ENCODE measurements at regions of chr4 and their contacts with region 1.

Region 1: GRCh38 chr4:81494031-81494431 is 22.3 kb upstream of the RASGEF1B start:
- DNase-seq: no peak
- ATAC-seq: peak; percentile 33
- H3K4me3 Mint-ChIP-seq: peak overlapping the region; percentile 57
- H3K27ac Mint-ChIP-seq: peak overlapping the region; percentile 82
- H3K4me1 Mint-ChIP-seq: peaks cover 55% of the 10 kb centered on the region
- H3K27me3 Mint-ChIP-seq: no peaks in the 10 kb centered on the region
- CTCF ChIP-seq: no peak

Region 2: GRCh38 chr4:80058740-80059139 is 1435.3 kb before region 1 on chr4:
- CTCF ChIA-PET with region 1: no interaction called
- POLR2A ChIA-PET with region 1: no interaction called
- intact Hi-C with region 1: loop called (anchors 5 kb)
- DNase-seq: no peak
- ATAC-seq: peak; percentile 89
- H3K4me3 Mint-ChIP-seq: peak overlapping the region; percentile 79
- H3K27ac Mint-ChIP-seq: peak overlapping the region; percentile 99
- H3K4me1 Mint-ChIP-seq: peaks cover 30% of the 10 kb centered on the region
- H3K27me3 Mint-ChIP-seq: no peaks in the 10 kb centered on the region
- CTCF ChIP-seq: no peak

Region 3: DNA sequence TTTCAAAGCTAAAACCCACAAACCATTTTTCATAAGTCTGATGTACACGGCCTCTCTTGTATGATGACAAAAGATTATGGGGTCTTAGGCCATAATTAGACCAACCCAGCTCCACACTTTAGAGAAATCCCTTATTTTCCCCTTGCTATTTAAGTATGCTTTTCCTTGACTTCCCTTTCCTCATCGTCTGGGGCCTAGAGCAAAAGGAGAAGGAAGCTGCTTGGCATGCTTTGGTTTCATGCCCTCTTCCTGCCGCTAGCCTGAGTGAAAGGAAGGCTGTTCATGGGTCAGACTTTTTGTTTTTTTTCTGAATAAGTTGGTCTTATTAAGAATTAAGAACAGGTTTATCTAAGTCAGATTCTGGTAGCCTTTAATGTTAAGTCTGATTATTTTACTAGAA is 11.7 kb before region 1 on chr4:
- CTCF ChIA-PET with region 1: interaction called, 4 read pairs
- POLR2A ChIA-PET with region 1: interaction called, 3 read pairs
- intact Hi-C with region 1: loop called (anchors 1 kb)
- DNase-seq: no peak
- ATAC-seq: no peak
- H3K4me3 Mint-ChIP-seq: no peak overlapping the region
- H3K27ac Mint-ChIP-seq: peak overlapping the region; percentile 43
- H3K4me1 Mint-ChIP-seq: peaks cover 8% of the 10 kb centered on the region
- H3K27me3 Mint-ChIP-seq: no peaks in the 10 kb centered on the region
- CTCF ChIP-seq: no peak

Region 4: DNA sequence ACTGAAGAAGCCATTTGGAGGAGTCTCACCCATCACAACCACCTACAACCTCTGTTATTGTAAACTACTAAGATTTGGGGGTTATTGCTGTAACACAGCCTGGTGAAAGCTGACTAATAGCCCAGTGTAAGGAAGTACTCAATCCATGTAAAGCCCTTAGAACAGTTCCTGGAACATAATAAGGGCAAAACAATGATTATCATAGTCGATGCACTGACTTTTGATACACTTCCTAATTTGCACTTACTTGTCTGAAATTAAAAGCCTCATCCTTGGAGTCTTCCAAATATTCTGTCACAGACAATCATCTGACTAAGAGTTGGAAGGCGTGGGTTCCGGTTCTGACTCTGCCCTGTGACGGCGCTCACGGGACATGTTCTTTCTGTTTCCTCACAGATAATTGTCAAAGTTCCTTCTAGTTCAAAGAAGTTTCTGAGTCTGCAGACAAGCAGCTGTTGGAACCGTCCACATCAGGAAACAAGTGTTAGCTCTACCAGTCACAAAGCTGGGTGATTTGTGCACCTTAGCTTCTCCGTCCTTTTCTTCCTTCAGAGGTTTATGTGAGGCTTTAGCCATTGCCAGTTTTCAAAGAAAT is 11.1 kb after region 1 on chr4:
- CTCF ChIA-PET with region 1: no interaction called
- POLR2A ChIA-PET with region 1: interaction called, 7 read pairs
- intact Hi-C with region 1: loop called (anchors 1 kb)
- DNase-seq: no peak
- ATAC-seq: peak; percentile 56
- H3K4me3 Mint-ChIP-seq: peak overlapping the region; percentile 71
- H3K27ac Mint-ChIP-seq: peak overlapping the region; percentile 92
- H3K4me1 Mint-ChIP-seq: peaks cover 86% of the 10 kb centered on the region
- H3K27me3 Mint-ChIP-seq: no peaks in the 10 kb centered on the region
- CTCF ChIP-seq: no peak

Region 5: GRCh38 chr4:81606801-81607501 is 112.9 kb after region 1 on chr4:
- CTCF ChIA-PET with region 1: no interaction called
- POLR2A ChIA-PET with region 1: no interaction called
- intact Hi-C with region 1: loop called (anchors 1 kb)
- DNase-seq: no peak
- ATAC-seq: peak; percentile 54
- H3K4me3 Mint-ChIP-seq: peak overlapping the region; percentile 55
- H3K27ac Mint-ChIP-seq: peak overlapping the region; percentile 86
- H3K4me1 Mint-ChIP-seq: peaks cover 58% of the 10 kb centered on the region
- H3K27me3 Mint-ChIP-seq: no peaks in the 10 kb centered on the region
- CTCF ChIP-seq: no peak

Region 6: GRCh38 chr4:81631958-81632441 is 138.0 kb after region 1 on chr4:
- CTCF ChIA-PET with region 1: no interaction called
- POLR2A ChIA-PET with region 1: no interaction called
- intact Hi-C with region 1: loop called (anchors 1 kb)
- DNase-seq: no peak
- ATAC-seq: peak; percentile 57
- H3K4me3 Mint-ChIP-seq: peak overlapping the region; percentile 15
- H3K27ac Mint-ChIP-seq: peak overlapping the region; percentile 60
- H3K4me1 Mint-ChIP-seq: peaks cover 60% of the 10 kb centered on the region
- H3K27me3 Mint-ChIP-seq: no peaks in the 10 kb centered on the region
- CTCF ChIP-seq: no peak

Region 7: DNA sequence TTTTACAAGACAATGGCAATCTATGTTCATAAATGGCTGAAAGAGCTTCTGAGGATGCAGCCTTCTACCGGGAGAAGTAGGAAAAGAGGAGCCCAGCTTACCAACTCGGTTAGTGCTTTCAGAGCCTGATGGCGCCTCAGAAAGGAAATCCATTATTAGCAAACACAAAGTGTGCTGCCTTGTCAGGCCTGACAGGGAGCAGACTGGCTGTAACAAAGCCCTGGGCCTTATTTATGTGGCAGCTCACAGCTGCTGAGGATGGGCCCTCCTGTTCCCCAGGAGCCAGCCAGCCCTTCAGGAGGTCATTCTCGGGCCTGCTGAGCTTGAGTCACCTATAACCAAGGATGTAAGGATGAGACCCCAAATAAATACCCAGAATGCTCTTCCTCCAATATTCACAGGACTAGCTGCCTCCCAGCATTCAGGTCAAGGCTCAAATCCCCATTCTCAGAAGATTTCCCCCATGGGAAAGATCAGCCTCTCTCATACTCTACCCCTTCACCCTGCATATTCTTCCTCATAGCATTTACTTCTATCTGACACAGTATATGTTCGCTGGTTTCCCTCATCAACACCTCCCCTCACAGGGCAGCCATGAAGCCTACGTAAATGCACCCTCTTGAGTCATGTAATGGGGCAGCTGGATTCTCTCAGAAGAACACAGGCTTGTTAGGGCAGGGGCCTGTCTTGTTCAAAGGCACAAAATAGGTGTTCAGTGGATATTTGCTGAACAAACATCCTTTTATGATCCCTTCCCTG is 204.7 kb after region 1 on chr4:
- CTCF ChIA-PET with region 1: no interaction called
- POLR2A ChIA-PET with region 1: no interaction called
- intact Hi-C with region 1: no loop called
- DNase-seq: no peak
- ATAC-seq: no peak
- H3K4me3 Mint-ChIP-seq: no peak overlapping the region
- H3K27ac Mint-ChIP-seq: no peak overlapping the region
- H3K4me1 Mint-ChIP-seq: peaks cover 2% of the 10 kb centered on the region
- H3K27me3 Mint-ChIP-seq: no peaks in the 10 kb centered on the region
- CTCF ChIP-seq: no peak